Mammary epithelial cell (primary cell): ENCODE measurements at regions of chr2 and their contacts with region 1.

Region 1: DNA sequence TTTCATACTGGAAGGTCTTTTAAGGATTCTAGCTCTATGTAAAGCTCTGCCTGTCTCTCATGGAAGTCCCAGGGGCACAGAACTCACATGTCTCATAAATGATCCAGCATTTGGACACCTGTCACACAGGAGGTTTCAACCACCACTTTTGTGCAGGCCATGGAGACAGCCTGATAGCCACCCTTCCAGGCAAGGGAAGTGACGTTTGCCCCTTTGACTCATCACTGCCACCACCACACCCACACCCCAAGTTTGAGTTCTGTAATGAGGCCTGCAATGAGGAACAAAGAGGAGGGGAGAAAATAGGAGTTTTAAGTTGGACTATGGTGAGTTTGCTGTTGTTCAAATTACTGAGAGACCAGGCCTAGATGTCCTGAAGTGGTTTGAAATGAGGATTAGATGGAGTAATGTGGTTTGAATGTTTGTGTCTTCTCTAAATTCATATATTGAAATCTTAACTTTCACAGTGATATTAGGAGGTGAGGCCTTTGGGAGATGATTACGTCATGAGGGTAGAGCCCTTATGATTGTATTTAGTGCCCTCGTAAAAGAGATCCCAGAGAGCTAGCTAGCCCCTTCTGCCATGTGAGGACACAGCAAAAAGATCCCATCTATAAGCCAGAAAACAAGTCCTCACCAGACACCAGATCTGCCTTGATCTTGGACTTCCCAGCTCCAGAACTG is 175.3 kb upstream of the EPHA4 start:
- DNase-seq: no peak
- H3K4me3 ChIP-seq: no peak overlapping the region
- H3K27ac ChIP-seq: no peak overlapping the region
- H3K4me1 ChIP-seq: no peaks in the 10 kb centered on the region
- H3K27me3 ChIP-seq: no peaks in the 10 kb centered on the region
- CTCF ChIP-seq: no peak

Region 2: GRCh38 chr2:221388891-221389290 is 358.5 kb before region 1 on chr2:
- CTCF ChIA-PET with region 1: no interaction called
- dilution Hi-C with region 1: no loop called
- in situ Hi-C with region 1: no loop called
- intact Hi-C with region 1: no loop called
- DNase-seq: no peak
- H3K4me3 ChIP-seq: no peak overlapping the region
- H3K27ac ChIP-seq: no peak overlapping the region
- H3K4me1 ChIP-seq: no peaks in the 10 kb centered on the region
- H3K27me3 ChIP-seq: no peaks in the 10 kb centered on the region
- CTCF ChIP-seq: no peak

Region 3: DNA sequence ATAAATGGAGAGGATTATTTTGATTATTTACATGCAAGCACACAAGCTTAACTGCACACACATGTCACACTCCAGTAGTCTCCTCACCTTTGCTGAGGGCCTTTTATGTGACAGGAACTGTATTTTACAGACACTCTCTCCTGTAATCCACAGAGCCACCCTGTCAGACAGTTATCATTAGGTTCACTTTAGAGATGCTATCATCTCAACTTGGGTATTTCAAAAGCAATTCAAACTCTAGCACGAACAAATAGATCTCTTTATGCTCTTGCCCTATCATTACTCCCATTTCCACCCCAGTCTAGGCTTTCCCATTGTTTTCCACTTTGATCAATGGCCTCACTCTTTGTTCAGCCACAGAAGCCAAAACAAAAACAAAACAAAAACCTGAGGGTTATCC is 105.9 kb after region 1 on chr2:
- CTCF ChIA-PET with region 1: interaction called, 10 read pairs
- dilution Hi-C with region 1: no loop called
- in situ Hi-C with region 1: no loop called
- intact Hi-C with region 1: no loop called
- DNase-seq: no peak
- H3K4me3 ChIP-seq: no peak overlapping the region
- H3K27ac ChIP-seq: no peak overlapping the region
- H3K4me1 ChIP-seq: no peaks in the 10 kb centered on the region
- H3K27me3 ChIP-seq: no peaks in the 10 kb centered on the region
- CTCF ChIP-seq: no peak